ENCODE measurements at regions of chr22 and their contacts with region 1.

Region 1: DNA sequence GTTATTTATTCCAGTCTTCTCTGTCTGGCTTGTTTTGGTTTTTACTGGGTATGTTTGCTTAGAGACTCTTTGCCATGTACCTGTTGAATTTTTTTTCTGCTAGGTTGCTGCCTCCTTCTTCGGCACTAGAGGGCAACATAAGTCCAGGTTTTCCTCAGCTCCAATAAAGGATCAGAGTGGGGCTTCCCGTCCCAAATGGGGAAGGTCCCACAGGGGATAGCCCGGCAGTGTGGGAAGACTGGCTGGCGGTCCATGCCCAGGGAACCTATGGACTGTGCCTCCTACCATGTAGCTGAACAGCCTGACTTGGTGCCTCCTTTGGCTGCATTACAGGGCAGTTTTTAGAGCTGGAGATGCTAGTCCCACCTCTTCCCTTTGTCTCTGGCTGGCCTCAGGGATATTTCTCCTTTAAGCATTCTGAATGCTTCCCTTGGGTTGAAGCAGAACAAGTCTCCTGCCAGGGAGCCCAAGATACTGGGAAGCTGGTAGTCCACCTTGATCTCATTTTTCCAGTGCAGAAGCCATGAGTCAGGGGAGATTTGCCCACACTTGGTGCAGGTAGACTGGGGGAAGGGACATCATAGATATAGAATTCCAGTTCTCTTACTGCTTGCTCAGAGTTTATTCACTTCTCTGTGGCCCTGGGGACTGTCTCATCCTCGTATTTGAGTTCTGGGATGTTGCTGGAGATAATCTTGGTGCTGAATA is 60.2 kb downstream of the BRD1 start:
- DNase-seq: peak; percentile 13
- H3K4me3 ChIP-seq: no peak overlapping the region
- H3K27ac ChIP-seq: no peak overlapping the region
- H3K4me1 ChIP-seq: peaks cover 0 to 8% (median 3%) of the 10 kb centered on the region in 4 donors
- H3K27me3 ChIP-seq: no peaks in the 10 kb centered on the region
- CTCF ChIP-seq: peak; percentile 49 to 72 (median 58)
- EP300 ChIP-seq: no peak
- POLR2A ChIP-seq: no peak

Region 2: GRCh38 chr22:49156660-49157285 is 610.7 kb before region 1 on chr22:
- in situ Hi-C with region 1: no loop called
- intact Hi-C with region 1: no loop called
- DNase-seq: peak; percentile 17
- H3K4me3 ChIP-seq: no peak overlapping the region
- H3K27ac ChIP-seq: no peak overlapping the region
- H3K4me1 ChIP-seq: no peaks in the 10 kb centered on the region
- H3K27me3 ChIP-seq: peaks cover 16% of the 10 kb centered on the region
- CTCF ChIP-seq: no peak
- EP300 ChIP-seq: no peak
- POLR2A ChIP-seq: no peak

Region 3: DNA sequence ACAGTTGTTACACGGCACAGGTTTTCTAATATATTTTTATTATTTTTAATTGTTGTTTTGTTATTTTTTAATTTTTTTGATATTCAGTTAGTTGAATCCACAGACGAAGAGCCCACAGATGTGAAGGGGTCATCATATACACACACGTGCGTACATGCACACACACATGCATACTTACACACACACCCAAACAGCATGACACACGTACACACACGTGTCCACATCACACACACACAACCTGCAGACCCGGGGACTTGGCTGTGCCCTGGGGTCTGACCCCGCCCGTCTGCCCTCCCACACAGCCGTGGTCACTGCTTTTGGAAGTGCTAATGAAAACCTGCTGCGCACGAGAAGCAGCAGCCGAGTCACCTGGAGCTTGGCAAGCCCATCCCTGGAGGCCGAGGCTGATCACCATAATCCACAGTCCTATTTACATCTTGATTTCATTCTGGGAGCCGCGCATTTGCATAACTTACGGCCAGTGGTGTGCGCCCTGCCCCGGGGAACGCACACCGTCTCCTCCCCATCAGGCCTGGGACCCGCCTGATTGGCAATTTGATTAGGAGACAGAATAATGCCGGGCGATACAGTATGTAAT is 50.1 kb before region 1 on chr22:
- in situ Hi-C with region 1: no loop called
- intact Hi-C with region 1: no loop called
- DNase-seq: no peak
- H3K4me3 ChIP-seq: no peak overlapping the region
- H3K27ac ChIP-seq: no peak overlapping the region
- H3K4me1 ChIP-seq: no peaks in the 10 kb centered on the region
- H3K27me3 ChIP-seq: peaks cover 16% of the 10 kb centered on the region
- CTCF ChIP-seq: no peak
- EP300 ChIP-seq: no peak
- POLR2A ChIP-seq: no peak

Region 4: DNA sequence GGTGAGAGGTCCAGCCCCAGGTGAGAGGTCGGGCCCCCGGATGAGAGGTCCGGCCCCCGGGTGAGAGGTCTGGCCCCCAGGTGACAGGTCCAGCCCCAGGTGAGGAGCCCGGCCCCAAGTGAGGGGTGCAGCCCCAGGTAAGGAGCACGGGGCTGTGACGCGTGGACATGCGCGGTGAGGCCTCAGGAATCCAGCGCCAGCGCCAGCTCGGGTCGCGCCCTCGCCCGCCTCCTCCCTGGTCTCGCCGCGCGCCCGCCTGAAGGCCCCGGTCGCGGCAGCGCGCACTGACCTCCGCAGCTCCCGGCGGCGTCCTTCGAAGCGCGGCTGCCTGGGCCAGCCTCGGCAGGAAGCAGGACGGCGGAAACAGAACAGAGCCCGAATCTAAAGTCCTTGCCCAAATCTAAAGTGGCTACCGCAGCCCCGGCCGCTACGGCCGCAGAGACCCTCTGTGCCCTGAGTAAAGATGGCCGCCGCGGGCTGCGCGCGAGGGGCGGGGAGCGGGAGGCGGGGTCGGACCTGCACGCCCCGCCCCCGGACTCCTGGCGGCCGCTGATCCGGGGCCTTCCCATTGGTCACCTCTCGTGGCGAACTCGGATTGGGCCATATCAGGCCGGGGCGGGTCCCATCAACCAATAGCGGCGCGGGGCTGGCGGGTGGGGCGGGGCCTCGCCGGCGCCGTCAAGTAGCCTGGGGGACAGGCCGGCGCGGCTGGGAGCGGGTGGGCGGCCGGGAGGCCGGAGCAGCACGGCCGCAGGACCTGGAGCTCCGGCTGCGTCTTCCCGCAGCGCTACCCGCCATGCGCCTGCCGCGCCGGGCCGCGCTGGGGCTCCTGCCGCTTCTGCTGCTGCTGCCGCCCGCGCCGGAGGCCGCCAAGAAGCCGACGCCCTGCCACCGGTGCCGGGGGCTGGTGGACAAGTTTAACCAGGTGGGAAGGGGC is 150.7 kb after region 1 on chr22 and contains the starts of genes ALG12 and CRELD2:
- in situ Hi-C with region 1: loop called in 1 of 4 experiments (anchors 10 kb)
- intact Hi-C with region 1: loop called (anchors 5 kb)
- DNase-seq: peak; percentile 98
- H3K4me3 ChIP-seq: peak within 1 kb of the TSS; percentile 69 to 89 (median 76)
- H3K27ac ChIP-seq: peak within 1 kb of the TSS; percentile 94 to 97 (median 95)
- H3K4me1 ChIP-seq: peaks cover 12 to 23% (median 19%) of the 10 kb centered on the region in 4 donors
- H3K27me3 ChIP-seq: no peaks in the 10 kb centered on the region
- CTCF ChIP-seq: no peak
- EP300 ChIP-seq: no peak
- POLR2A ChIP-seq: peak; percentile 63
- total RNA-seq, gene ALG12: 10.1 to 24.4 (median 18.3) TPM
- total RNA-seq, gene CRELD2: 31.0 to 37.9 (median 36.4) TPM

Region 5: GRCh38 chr22:49923445-49923844 is 155.9 kb after region 1 on chr22:
- in situ Hi-C with region 1: loop called in 1 of 4 experiments (anchors 10 kb)
- intact Hi-C with region 1: loop called (anchors 5 kb)
- DNase-seq: no peak
- H3K4me3 ChIP-seq: no peak overlapping the region
- H3K27ac ChIP-seq: no peak overlapping the region
- H3K4me1 ChIP-seq: peaks cover 5 to 12% (median 9%) of the 10 kb centered on the region in 4 donors
- H3K27me3 ChIP-seq: no peaks in the 10 kb centered on the region
- CTCF ChIP-seq: peak in 1 of 5 experiments; percentile 14
- EP300 ChIP-seq: no peak
- POLR2A ChIP-seq: no peak

Region 6: DNA sequence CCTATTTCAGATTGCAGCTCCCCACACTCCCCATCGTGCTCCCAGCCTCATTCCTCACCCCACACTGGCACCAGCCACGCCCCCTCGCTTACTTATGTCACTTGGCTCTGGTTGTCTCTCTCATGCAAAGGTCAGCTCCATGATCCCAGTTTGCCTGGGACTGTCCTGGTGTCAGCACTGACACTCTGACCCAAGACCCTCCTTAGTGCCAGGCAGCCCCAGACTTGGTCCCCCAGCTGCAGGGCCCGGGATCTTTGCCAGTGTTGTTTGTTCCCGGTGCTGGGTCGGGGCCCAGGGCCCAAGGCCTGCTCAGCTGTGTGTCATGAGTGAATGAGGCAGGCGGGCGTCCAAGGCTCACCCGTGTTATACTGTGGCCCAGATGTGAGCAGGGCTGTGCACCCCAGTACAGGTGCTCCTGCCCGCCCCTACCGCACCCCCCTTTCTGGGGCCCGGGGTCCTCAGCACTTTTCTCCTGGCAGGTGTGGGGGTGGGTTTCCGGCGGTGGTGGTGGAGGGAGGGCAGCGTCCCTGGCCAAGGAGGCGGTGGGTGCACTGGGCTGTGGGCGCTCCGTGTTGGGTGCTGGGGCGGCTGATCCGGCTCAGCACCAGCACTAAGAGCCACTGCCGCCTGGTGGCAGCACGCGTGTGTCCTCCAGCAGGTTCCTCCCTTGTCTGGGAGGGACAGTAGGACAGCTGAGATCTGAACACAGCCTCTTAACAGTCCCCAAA is 225.6 kb after region 1 on chr22:
- in situ Hi-C with region 1: no loop called
- intact Hi-C with region 1: loop called (anchors 5 kb)
- DNase-seq: peak; percentile 83
- H3K4me3 ChIP-seq: no peak overlapping the region
- H3K27ac ChIP-seq: no peak overlapping the region
- H3K4me1 ChIP-seq: peaks cover 6 to 21% (median 17%) of the 10 kb centered on the region in 4 donors
- H3K27me3 ChIP-seq: no peaks in the 10 kb centered on the region
- CTCF ChIP-seq: peak; percentile 72 to 84 (median 79)
- EP300 ChIP-seq: no peak
- POLR2A ChIP-seq: no peak

Region 7: DNA sequence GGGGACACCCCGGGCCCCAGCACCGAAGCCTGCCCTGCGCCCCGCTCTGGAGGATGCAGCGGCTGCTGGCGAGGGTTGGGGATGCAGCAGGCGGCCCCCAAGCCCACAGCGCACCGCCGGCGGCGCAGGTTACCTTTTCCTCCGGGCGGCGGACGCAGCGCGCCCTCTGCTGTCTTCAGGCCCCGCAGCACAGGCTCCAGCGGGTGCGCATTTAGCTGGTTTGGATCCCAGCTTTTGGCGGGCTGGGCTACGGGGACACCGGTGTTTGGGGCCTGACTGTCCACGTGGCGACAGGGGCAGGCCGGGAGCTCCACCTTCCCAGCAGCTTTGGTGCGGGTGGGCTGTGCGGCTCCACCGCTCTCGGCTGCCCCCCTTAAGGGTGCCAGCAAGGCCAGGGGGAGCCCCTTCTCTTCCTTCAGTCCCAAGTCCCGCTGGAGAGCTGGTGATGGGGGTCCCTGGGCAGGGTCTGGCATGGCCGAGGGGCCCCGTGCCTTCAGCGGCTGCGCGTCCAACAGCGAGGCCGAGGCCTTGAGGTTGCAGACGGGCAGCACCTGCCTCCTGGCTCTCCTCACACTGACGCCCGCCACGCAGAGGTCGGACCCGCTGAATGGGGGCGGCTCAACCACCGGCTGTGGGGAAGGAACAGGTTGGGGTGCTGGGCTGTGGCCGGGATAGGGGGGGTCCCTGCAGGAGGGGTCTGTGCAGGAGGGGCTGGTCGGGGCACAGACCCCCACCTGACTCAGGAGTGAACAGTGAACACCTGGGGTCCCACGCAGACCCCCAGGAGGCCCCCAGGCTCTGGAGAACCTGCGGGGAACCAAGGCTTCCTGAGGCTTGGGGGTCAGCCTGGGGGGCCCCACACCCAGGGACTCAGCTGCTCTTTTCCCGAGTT is 263.0 kb after region 1 on chr22:
- in situ Hi-C with region 1: loop called (anchors 25 kb)
- intact Hi-C with region 1: loop called (anchors 10 kb)
- DNase-seq: peak; percentile 77
- H3K4me3 ChIP-seq: no peak overlapping the region
- H3K27ac ChIP-seq: no peak overlapping the region
- H3K4me1 ChIP-seq: peaks cover 0 to 9% (median 7%) of the 10 kb centered on the region in 4 donors
- H3K27me3 ChIP-seq: peaks cover 53% of the 10 kb centered on the region
- CTCF ChIP-seq: peak; percentile 83 to 94 (median 87)
- EP300 ChIP-seq: no peak
- POLR2A ChIP-seq: no peak